ENCODE measurements at regions of chr4 and their contacts with region 1.

Region 1: DNA sequence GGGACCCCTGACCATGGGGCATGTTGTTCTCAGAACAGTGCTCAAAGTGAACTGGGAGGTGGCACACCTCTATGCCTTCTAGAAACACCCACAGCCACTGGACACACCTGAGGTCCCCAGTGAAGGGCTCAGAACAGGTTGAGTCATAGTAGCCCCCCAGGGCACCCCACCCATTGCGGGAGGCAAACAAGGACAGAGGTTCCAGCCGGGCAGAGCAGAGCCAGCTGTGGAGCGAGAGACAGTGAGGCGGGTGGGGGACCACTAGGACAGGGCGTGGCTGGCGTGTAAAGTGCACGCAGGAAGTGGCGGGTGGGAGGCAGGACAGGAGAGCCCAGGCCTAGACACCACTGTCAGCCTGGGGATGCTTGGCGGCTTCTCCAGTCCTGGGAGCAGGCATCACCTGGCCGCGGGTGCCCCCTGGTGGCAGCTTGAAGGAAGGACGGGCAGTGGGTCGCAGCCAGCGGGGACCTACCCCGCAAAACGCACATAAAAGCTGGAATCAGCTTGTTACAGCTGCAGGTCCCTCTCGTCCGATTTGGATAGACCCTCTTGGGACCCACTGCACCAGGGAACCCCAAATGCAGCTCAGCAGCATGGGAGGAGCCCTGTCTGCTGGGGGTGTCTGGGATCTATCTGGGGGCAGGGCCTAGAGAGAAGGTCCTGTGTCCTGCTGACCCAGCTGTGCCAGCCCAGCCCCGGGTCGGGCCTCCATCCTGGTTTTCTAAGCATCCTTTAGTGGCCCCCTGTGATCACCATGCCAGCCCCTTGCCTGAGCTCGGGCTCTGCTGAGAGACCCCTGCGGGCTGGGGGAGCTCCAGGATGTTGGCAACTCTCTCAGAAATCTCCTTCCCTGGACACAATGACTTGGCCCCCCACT is 57.6 kb downstream of the WFS1 start:
- DNase-seq: peak; percentile 68 to 74 (median 70)
- H3K4me3 ChIP-seq: no peak overlapping the region
- H3K4me3 Mint-ChIP-seq: no peak overlapping the region
- H3K27ac ChIP-seq: no peak overlapping the region
- H3K27ac Mint-ChIP-seq: no peak overlapping the region
- H3K4me1 ChIP-seq: no peaks in the 10 kb centered on the region
- H3K4me1 Mint-ChIP-seq: peaks cover 0 to 3% (median 0%) of the 10 kb centered on the region in 4 donors
- H3K27me3 ChIP-seq: peaks cover 10% of the 10 kb centered on the region
- H3K27me3 Mint-ChIP-seq: peaks cover 9 to 10% of the 10 kb centered on the region in 2 donors

Region 2: GRCh38 chr4:5998333-5998936 is 328.8 kb before region 1 on chr4:
- CTCF ChIA-PET with region 1: interaction called, 104 read pairs
- POLR2A ChIA-PET with region 1: no interaction called
- intact Hi-C with region 1: no loop called
- DNase-seq: peak in 4 of 5 donors; percentile 23 to 33 (median 30)
- H3K4me3 ChIP-seq: no peak overlapping the region
- H3K4me3 Mint-ChIP-seq: no peak overlapping the region
- H3K27ac ChIP-seq: no peak overlapping the region
- H3K27ac Mint-ChIP-seq: no peak overlapping the region
- H3K4me1 ChIP-seq: no peaks in the 10 kb centered on the region
- H3K4me1 Mint-ChIP-seq: peaks cover 0 to 4% (median 1%) of the 10 kb centered on the region in 4 donors
- H3K27me3 ChIP-seq: no peaks in the 10 kb centered on the region
- H3K27me3 Mint-ChIP-seq: peaks cover 2 to 7% of the 10 kb centered on the region in 2 donors

Region 3: DNA sequence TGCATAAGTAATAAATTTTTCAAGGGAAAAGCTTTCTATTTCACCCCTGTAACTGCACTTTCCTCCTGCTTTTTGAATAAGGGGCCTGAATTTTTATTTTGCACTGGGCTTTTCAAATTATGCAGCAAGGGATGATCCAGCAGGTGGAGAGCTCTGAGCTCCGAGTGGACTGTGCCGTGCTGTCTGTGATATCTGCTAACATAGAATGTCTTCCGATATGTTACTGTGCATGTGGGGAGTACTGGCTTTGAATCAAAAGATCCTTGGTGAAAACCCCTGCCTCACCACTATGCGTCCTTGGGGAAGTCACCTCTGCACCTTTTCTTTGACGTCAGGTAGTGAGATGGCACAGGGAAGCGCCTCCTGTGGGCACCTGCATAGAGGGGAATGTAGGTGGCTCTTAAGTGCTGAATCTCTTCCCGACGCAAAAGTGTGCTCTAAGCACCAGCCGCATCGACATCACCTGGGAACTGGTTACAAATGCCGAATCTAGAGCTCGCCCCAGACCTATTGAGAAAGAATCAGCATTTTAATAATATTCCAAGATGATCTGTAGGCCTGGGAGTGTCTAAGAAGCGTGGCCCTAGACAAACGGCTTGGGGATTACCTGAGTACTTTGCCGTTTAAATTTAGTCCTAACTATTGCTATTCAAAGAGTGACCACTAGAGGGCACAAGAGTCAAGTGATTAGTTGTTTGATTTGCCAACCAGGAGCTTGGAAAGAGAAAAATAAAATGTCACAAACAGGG is 76.9 kb before region 1 on chr4:
- CTCF ChIA-PET with region 1: interaction called, 374 read pairs
- POLR2A ChIA-PET with region 1: interaction called, 4 read pairs
- intact Hi-C with region 1: loop called (anchors 1 kb)
- DNase-seq: peak in 4 of 5 donors; percentile 61 to 70 (median 66)
- H3K4me3 ChIP-seq: no peak overlapping the region
- H3K4me3 Mint-ChIP-seq: no peak overlapping the region
- H3K27ac ChIP-seq: no peak overlapping the region
- H3K27ac Mint-ChIP-seq: no peak overlapping the region
- H3K4me1 ChIP-seq: no peaks in the 10 kb centered on the region
- H3K4me1 Mint-ChIP-seq: peaks cover 0 to 6% (median 5%) of the 10 kb centered on the region in 4 donors
- H3K27me3 ChIP-seq: peaks cover 6% of the 10 kb centered on the region
- H3K27me3 Mint-ChIP-seq: peaks cover 10 to 30% of the 10 kb centered on the region in 2 donors

Region 4: GRCh38 chr4:6269616-6270511 is 57.4 kb before region 1 on chr4 and contains the start of gene WFS1:
- CTCF ChIA-PET with region 1: interaction called, 20 read pairs
- POLR2A ChIA-PET with region 1: interaction called, 3 read pairs
- intact Hi-C with region 1: no loop called
- DNase-seq: peak; percentile 94 to 96 (median 94)
- H3K4me3 ChIP-seq: peak within 1 kb of the TSS in 1 of 2 donors; percentile 75
- H3K4me3 Mint-ChIP-seq: peak within 1 kb of the TSS; percentile 85 to 92 (median 88)
- H3K27ac ChIP-seq: peak within 1 kb of the TSS; percentile 49
- H3K27ac Mint-ChIP-seq: peak within 1 kb of the TSS in 6 of 7 donors; percentile 48 to 81 (median 71)
- H3K4me1 ChIP-seq: peaks cover 10% of the 10 kb centered on the region
- H3K4me1 Mint-ChIP-seq: peaks cover 13 to 25% (median 14%) of the 10 kb centered on the region in 4 donors
- H3K27me3 ChIP-seq: no peaks in the 10 kb centered on the region
- H3K27me3 Mint-ChIP-seq: peaks cover 0 to 2% of the 10 kb centered on the region in 2 donors
- total RNA-seq, gene WFS1: 5.4 to 5.5 TPM

Region 5: GRCh38 chr4:6546681-6547447 is 219.6 kb after region 1 on chr4:
- CTCF ChIA-PET with region 1: interaction called, 10 read pairs
- POLR2A ChIA-PET with region 1: no interaction called
- intact Hi-C with region 1: loop called (anchors 2 kb)
- DNase-seq: peak in 4 of 5 donors; percentile 43 to 51 (median 47)
- H3K4me3 ChIP-seq: no peak overlapping the region
- H3K4me3 Mint-ChIP-seq: no peak overlapping the region
- H3K27ac ChIP-seq: no peak overlapping the region
- H3K27ac Mint-ChIP-seq: peak overlapping the region in 2 of 7 donors; percentile 19 to 87
- H3K4me1 ChIP-seq: no peaks in the 10 kb centered on the region
- H3K4me1 Mint-ChIP-seq: peaks cover 0 to 5% (median 0%) of the 10 kb centered on the region in 4 donors
- H3K27me3 ChIP-seq: peaks cover 3% of the 10 kb centered on the region
- H3K27me3 Mint-ChIP-seq: peaks cover 24 to 34% of the 10 kb centered on the region in 2 donors

Measured in CD4-positive, alpha-beta memory T cell (primary cell).